Prostate gland (tissue), 2 donors: ENCODE measurements at regions of chr4 and their contacts with region 1.

Region 1: GRCh38 chr4:81069706-81070331 is 39.3 kb downstream of the BMP3 start:
- DNase-seq: peak; percentile 80
- H3K4me3 ChIP-seq: no peak overlapping the region
- H3K27ac ChIP-seq: no peak overlapping the region
- H3K4me1 ChIP-seq: no peaks in the 10 kb centered on the region
- H3K27me3 ChIP-seq: no peaks in the 10 kb centered on the region
- CTCF ChIP-seq: peak; percentile 59 to 87 (median 76)
- POLR2A ChIP-seq: no peak

Region 2: DNA sequence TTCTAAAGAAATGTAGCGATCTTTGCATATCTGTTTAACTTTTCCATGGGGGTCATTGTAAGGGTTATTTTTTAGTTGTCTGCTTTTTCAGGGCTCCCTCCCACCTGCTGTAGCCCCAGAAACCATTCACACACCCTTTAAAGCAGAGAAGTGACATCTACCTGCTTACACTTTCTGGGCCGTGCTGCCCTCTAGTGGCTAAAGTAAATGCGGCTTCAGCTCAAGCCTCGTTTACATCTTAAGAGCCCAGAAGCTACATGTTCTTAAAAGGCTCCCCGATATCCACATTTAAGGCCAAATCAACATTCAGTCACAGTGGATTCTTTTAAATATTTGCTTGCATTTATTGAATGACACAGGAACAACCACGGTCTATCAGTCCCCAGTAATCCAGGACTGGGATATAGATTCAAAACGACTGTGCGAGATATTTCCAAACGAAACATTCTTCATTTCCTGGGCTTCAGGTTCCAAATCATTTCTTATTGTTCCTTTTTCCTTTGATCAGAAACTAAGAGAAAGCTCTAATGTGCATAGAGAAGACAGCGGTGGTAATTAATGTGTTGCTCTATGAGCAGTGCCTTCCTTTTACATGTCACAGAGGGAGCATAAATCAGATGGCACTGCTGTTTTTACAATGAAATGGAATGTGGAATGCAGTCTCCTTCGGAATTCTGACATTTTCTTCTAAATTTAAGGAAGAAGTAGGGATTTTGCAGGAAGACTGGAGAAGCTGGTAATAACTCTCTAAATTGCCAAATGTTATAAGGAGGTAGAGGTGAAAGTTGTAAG is 282.0 kb after region 1 on chr4:
- intact Hi-C with region 1: loop called (anchors 2 kb)
- DNase-seq: peak; percentile 81
- H3K4me3 ChIP-seq: no peak overlapping the region
- H3K27ac ChIP-seq: peak overlapping the region; percentile 3 to 39
- H3K4me1 ChIP-seq: no peaks in the 10 kb centered on the region
- H3K27me3 ChIP-seq: no peaks in the 10 kb centered on the region
- CTCF ChIP-seq: peak; percentile 61 to 92 (median 76)
- POLR2A ChIP-seq: no peak